Psoas muscle (tissue), 8 donors: ENCODE measurements at regions of chr16 and their contacts with region 1.

Region 1: DNA sequence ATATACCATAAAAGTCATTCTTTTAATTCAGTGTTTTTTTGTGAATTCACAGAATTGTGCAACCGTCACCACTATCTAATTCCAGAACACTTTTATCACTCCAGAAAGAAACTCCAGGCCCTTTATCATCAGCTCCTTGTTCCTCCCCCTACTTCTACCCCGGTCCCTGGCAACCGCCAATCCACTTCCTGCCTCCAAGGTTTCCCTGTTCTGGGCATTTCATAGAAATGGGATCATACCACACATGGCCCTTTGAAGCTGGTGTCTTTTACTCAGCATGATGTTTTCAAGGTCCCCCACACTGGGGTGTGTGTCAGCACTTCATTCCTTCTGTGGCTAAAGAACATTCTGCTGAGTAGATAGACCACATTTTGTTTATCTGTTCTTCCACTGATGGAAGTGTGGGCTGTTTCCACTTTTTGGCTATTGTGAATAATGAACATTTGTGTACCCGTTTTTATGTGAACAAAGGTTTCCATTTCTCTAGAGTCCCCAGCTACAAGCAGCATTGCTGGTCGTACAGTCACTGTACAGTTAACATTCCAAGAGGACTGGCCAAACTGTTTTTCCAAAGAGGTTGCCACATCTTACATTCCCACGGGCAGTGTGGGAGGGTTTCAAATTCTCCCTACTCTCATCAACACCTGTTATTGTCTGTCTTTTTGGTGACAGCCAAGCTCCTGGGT is 75.8 kb upstream of the ZNF469 start:
- DNase-seq: peak; percentile 15 to 49
- ATAC-seq: peak; percentile 88 to 98 (median 95)
- H3K4me3 ChIP-seq: no peak overlapping the region
- H3K27ac ChIP-seq: peak overlapping the region; percentile 23
- H3K4me1 ChIP-seq: peaks cover 12% of the 10 kb centered on the region
- H3K27me3 ChIP-seq: peaks cover 0 to 6% (median 0%) of the 10 kb centered on the region in 3 donors
- CTCF ChIP-seq: no peak

Region 2: GRCh38 chr16:88264611-88265285 is 42.3 kb before region 1 on chr16:
- intact Hi-C with region 1: loop called in 1 of 2 experiments (anchors 5 kb)
- DNase-seq: peak; percentile 97 to 98
- ATAC-seq: peak; percentile 92 to 95 (median 94)
- H3K4me3 ChIP-seq: peak overlapping the region; percentile 11
- H3K27ac ChIP-seq: no peak overlapping the region
- H3K4me1 ChIP-seq: peaks cover 17% of the 10 kb centered on the region
- H3K27me3 ChIP-seq: peaks cover 0 to 6% (median 4%) of the 10 kb centered on the region in 3 donors
- CTCF ChIP-seq: no peak